ENCODE measurements at regions of chr5 and their contacts with region 1.

Region 1: DNA sequence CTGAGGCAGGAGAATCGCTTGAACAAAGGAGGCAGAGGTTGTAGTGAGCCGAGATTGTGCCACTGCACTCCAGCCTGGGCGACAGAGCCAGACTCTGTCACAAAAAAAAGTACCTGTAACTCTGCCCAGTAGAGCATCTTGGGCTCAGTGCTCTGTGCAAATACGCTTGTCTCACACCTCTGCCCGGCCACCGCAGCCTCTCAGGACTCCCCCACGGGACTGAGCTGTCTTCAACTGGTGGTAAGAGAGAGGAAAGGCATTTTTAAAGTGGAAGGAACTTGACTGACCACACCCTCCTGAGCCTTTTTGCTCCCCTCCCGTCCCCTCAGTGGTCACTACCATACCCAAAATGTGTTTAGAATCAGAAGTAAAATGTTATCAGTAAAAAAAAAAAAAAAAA is 174.3 kb upstream of the PIK3R1 start:
- DNase-seq: no peak
- ATAC-seq: peak; percentile 87
- H3K4me3 Mint-ChIP-seq: peak overlapping the region; percentile 67
- H3K27ac Mint-ChIP-seq: peak overlapping the region; percentile 80
- H3K4me1 Mint-ChIP-seq: peaks cover 31% of the 10 kb centered on the region
- H3K27me3 Mint-ChIP-seq: no peaks in the 10 kb centered on the region
- CTCF ChIP-seq: no peak

Region 2: DNA sequence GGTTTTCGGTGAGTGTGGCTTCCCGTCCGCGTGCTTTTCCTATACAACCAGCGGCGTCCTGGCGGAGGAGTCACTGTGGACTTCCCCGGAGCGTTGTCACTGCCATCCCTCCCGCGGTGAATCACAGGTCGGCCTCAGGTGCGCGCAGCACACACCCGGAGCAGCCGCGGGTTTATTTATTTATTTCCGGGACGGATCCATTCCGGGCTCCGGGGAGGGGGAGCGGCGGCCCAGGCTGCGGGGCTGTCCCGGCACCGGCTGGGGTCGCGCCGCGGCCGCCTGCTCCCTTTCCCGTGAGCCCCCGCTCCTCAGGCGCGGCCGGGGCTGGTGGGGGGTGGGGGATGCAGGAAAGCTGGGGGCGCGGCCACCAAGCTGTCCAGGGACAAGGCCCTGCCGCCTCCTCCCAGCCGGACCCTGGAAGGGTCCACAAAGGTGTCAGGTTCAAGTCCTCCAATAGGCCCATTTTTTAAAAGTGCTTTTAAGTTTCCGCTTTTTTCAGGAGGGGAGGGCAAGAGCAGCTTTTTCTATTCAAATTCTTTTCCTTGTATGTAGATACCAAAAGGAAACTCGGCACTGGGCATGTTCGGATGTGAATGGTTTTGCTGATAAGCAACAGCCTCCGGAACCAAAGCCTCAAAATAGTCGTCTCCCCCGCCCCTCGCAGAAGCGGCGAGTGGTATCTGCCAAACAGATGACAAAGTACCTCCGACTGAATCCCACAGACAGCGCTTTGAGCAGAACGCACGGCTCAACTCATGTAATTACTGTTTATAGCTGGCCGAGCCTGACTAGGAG is 1037.2 kb before region 1 on chr5:
- CTCF ChIA-PET with region 1: no interaction called
- POLR2A ChIA-PET with region 1: no interaction called
- intact Hi-C with region 1: loop called (anchors 10 kb)
- DNase-seq: peak; percentile 66
- ATAC-seq: peak; percentile 79
- H3K4me3 Mint-ChIP-seq: peak overlapping the region; percentile 87
- H3K27ac Mint-ChIP-seq: peak overlapping the region; percentile 72
- H3K4me1 Mint-ChIP-seq: peaks cover 30% of the 10 kb centered on the region
- H3K27me3 Mint-ChIP-seq: no peaks in the 10 kb centered on the region
- CTCF ChIP-seq: no peak

Region 3: GRCh38 chr5:68070591-68071281 is 29.4 kb after region 1 on chr5:
- CTCF ChIA-PET with region 1: no interaction called
- POLR2A ChIA-PET with region 1: no interaction called
- intact Hi-C with region 1: loop called (anchors 2 kb)
- DNase-seq: no peak
- ATAC-seq: peak; percentile 89
- H3K4me3 Mint-ChIP-seq: no peak overlapping the region
- H3K27ac Mint-ChIP-seq: no peak overlapping the region
- H3K4me1 Mint-ChIP-seq: peaks cover 10% of the 10 kb centered on the region
- H3K27me3 Mint-ChIP-seq: no peaks in the 10 kb centered on the region
- CTCF ChIP-seq: no peak

Region 4: GRCh38 chr5:68196876-68197275 is 155.6 kb after region 1 on chr5:
- CTCF ChIA-PET with region 1: no interaction called
- POLR2A ChIA-PET with region 1: no interaction called
- intact Hi-C with region 1: loop called (anchors 5 kb)
- DNase-seq: peak; percentile 21
- ATAC-seq: peak; percentile 99
- H3K4me3 Mint-ChIP-seq: peak overlapping the region; percentile 0
- H3K27ac Mint-ChIP-seq: peak overlapping the region; percentile 3
- H3K4me1 Mint-ChIP-seq: peaks cover 39% of the 10 kb centered on the region
- H3K27me3 Mint-ChIP-seq: no peaks in the 10 kb centered on the region
- CTCF ChIP-seq: no peak

Measured in activated B cell treated with CpG ODN at 0.5 μM for 24 hours (primary cell).